ENCODE measurements at regions of chr12 and their contacts with region 1.

Region 1: DNA sequence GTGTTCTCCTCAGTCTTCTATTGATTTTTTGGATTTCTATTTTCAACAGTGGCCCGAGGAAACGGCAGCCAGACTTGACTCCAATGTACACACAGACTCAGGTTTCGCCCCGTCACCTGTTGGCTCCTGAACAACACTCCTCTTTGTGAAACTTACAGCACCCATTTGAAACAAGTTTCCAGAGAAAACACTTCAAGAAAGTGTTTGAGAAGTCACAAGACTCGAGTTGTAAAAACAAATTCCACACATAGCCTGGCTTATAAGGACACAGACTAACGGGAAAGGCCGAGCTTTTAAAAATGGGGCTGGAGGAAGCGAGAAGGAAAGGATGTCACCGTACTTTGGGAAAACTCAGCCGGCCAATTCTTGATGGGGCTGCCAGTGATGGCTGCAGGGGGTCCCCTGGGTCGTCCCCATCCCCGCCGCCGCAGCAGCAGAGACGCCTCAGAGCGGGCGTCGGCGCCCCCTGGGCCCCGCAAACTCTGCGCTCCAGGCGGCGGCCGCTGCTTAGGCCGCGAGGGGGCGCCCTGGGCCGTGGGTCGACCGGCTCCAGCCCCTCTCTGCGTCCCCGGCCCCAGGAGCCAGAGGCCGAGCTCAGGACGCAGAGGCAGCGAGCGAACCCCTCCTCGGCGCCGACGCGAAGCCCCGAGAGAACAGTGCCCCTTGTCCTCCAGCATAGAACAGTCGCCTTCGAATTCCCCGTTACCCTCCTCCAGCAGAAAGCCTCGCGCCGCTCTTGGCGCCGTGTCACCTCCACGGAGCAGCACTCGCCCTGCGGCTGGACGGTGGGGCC is 106.9 kb downstream of the PRICKLE1 start:
- DNase-seq: peak; percentile 89
- ATAC-seq: peak; percentile 71
- H3K4me3 ChIP-seq: peak overlapping the region; percentile 67 to 96 (median 94)
- H3K4me3 Mint-ChIP-seq: peak overlapping the region; percentile 97
- H3K27ac ChIP-seq: peak overlapping the region; percentile 76 to 82
- H3K27ac Mint-ChIP-seq: peak overlapping the region; percentile 94
- H3K4me1 ChIP-seq: peaks cover 49 to 55% of the 10 kb centered on the region in 2 donors
- H3K4me1 Mint-ChIP-seq: peaks cover 60% of the 10 kb centered on the region
- H3K27me3 ChIP-seq: no peaks in the 10 kb centered on the region
- H3K27me3 Mint-ChIP-seq: no peaks in the 10 kb centered on the region
- CTCF ChIP-seq: peak; percentile 90

Region 2: DNA sequence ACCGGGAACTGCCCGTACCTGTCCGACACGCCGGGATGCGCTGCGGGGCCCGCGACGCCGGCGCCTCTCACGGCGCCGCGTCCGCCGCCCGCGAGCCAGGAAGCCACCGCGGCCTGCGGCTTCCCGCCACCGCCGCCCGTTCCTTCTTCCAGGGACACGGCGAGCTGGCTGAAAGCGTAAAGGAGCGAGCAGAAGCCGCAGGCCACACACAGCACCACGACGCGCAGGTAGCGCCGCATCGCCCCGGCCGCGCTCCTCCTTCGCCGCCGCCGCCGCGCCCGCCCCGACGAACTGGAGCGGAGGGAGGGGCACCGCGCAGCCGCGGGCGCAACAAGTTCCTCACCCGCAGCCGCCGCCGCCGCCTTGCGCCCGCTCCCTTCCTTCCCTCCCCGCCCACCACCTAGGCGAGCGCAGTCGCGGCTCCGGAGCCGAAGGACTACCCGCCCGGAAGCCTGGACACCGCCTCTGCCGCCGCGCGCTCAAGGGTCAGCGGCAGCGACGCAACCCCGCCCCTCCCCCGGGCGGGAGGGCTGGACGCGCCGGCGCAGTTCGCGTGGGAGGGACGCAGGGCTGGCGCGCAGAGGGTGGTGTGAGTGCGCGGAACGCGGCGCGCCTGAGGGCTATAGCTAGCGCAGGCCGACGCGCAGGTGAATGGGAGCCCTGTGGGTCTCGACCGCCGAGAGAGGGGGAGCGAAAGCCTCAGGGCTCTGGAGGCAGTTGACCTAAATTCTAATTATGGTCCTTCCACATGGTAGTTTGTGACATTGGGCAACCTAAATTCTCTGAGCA is 338.0 kb before region 1 on chr12 and contains the start of gene GXYLT1:
- CTCF ChIA-PET with region 1: no interaction called
- POLR2A ChIA-PET with region 1: no interaction called
- intact Hi-C with region 1: loop called (anchors 2 kb)
- DNase-seq: peak; percentile 90
- ATAC-seq: peak; percentile 91
- H3K4me3 ChIP-seq: peak within 1 kb of the TSS; percentile 60 to 78 (median 74)
- H3K4me3 Mint-ChIP-seq: peak within 1 kb of the TSS; percentile 94
- H3K27ac ChIP-seq: peak within 1 kb of the TSS in 1 of 2 donors; percentile 68
- H3K27ac Mint-ChIP-seq: peak within 1 kb of the TSS; percentile 88
- H3K4me1 ChIP-seq: peaks cover 21 to 27% of the 10 kb centered on the region in 2 donors
- H3K4me1 Mint-ChIP-seq: peaks cover 40% of the 10 kb centered on the region
- H3K27me3 ChIP-seq: no peaks in the 10 kb centered on the region
- H3K27me3 Mint-ChIP-seq: no peaks in the 10 kb centered on the region
- CTCF ChIP-seq: no peak
- total RNA-seq, gene GXYLT1: 9.4 and 10.4 TPM in 2 replicates

Region 3: DNA sequence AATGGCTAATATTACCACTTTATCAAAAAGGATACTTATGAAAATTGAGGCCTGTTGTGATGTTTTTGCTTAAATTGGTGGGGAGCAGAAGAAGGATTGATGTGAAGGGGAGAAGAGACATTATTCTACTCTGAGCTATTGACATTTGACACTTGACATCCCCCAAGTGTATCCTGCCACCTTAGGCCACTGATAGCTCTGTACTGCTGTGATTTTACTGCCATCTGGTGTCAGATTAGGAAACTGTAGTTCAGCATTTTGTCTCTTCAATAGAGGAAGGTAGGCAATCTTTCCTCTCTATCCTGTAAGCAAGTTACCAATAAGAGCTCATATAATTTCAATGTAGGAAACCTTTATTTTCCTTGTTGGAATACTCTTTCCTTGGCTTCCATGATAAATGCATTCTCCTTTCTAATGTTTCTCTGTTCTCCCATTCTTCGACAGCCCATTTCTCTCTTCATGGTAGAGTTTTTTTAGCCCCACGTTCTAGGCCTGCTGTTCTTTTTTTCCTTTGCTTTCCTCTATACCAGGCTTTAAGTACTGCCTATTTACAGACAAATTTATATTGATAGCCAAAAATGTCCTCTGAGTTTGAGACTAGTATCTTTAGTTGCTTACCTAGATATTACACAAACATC is 110.4 kb before region 1 on chr12:
- CTCF ChIA-PET with region 1: interaction called, 17 read pairs
- POLR2A ChIA-PET with region 1: interaction called, 3 read pairs
- intact Hi-C with region 1: loop called (anchors 5 kb)
- DNase-seq: peak; percentile 76
- ATAC-seq: peak; percentile 92
- H3K4me3 ChIP-seq: no peak overlapping the region
- H3K4me3 Mint-ChIP-seq: no peak overlapping the region
- H3K27ac ChIP-seq: no peak overlapping the region
- H3K27ac Mint-ChIP-seq: no peak overlapping the region
- H3K4me1 ChIP-seq: peaks cover 4 to 5% of the 10 kb centered on the region in 2 donors
- H3K4me1 Mint-ChIP-seq: peaks cover 14% of the 10 kb centered on the region
- H3K27me3 ChIP-seq: no peaks in the 10 kb centered on the region
- H3K27me3 Mint-ChIP-seq: no peaks in the 10 kb centered on the region
- CTCF ChIP-seq: peak; percentile 89

Region 4: GRCh38 chr12:42524716-42525115 is 42.1 kb after region 1 on chr12:
- CTCF ChIA-PET with region 1: no interaction called
- POLR2A ChIA-PET with region 1: interaction called, 12 read pairs
- intact Hi-C with region 1: no loop called
- DNase-seq: no peak
- ATAC-seq: no peak
- H3K4me3 ChIP-seq: no peak overlapping the region
- H3K4me3 Mint-ChIP-seq: no peak overlapping the region
- H3K27ac ChIP-seq: no peak overlapping the region
- H3K27ac Mint-ChIP-seq: no peak overlapping the region
- H3K4me1 ChIP-seq: no peaks in the 10 kb centered on the region
- H3K4me1 Mint-ChIP-seq: no peaks in the 10 kb centered on the region
- H3K27me3 ChIP-seq: no peaks in the 10 kb centered on the region
- H3K27me3 Mint-ChIP-seq: peaks cover 3% of the 10 kb centered on the region
- CTCF ChIP-seq: no peak

Region 5: GRCh38 chr12:42767326-42767954 is 284.8 kb after region 1 on chr12:
- CTCF ChIA-PET with region 1: no interaction called
- POLR2A ChIA-PET with region 1: no interaction called
- intact Hi-C with region 1: no loop called
- DNase-seq: no peak
- ATAC-seq: no peak
- H3K4me3 ChIP-seq: no peak overlapping the region
- H3K4me3 Mint-ChIP-seq: no peak overlapping the region
- H3K27ac ChIP-seq: no peak overlapping the region
- H3K27ac Mint-ChIP-seq: no peak overlapping the region
- H3K4me1 ChIP-seq: no peaks in the 10 kb centered on the region
- H3K4me1 Mint-ChIP-seq: peaks cover 2% of the 10 kb centered on the region
- H3K27me3 ChIP-seq: no peaks in the 10 kb centered on the region
- H3K27me3 Mint-ChIP-seq: peaks cover 3% of the 10 kb centered on the region
- CTCF ChIP-seq: no peak

Region 6: DNA sequence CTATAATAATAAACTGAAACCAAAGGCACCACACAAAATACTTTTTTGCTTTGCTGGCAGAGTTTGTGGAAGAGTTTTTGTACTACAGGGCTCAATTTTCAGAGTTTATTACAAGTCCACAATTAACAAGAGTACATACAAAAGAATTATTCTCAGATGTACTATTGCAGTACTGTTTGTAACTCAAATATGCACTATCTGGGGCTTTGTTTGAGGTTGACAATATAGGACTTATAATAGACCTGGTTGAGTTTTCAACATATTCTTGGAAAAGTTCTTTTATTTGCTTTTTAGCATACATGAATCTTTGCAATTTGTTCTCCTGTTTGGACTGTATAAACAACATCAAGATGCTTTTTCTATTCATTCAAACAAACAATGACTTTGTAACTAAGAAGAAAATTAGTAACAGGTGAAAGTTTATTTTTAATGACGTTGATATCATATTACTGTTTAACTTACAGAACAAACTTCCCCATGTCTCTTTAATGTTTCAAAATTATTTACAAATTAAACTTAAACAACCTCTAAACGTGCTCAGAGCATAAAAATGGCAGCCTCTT is 514.3 kb after region 1 on chr12:
- CTCF ChIA-PET with region 1: no interaction called
- POLR2A ChIA-PET with region 1: no interaction called
- intact Hi-C with region 1: no loop called
- DNase-seq: no peak
- ATAC-seq: no peak
- H3K4me3 ChIP-seq: no peak overlapping the region
- H3K4me3 Mint-ChIP-seq: no peak overlapping the region
- H3K27ac ChIP-seq: no peak overlapping the region
- H3K27ac Mint-ChIP-seq: no peak overlapping the region
- H3K4me1 ChIP-seq: no peaks in the 10 kb centered on the region
- H3K4me1 Mint-ChIP-seq: no peaks in the 10 kb centered on the region
- H3K27me3 ChIP-seq: no peaks in the 10 kb centered on the region
- H3K27me3 Mint-ChIP-seq: peaks cover 3% of the 10 kb centered on the region
- CTCF ChIP-seq: no peak

Region 7: DNA sequence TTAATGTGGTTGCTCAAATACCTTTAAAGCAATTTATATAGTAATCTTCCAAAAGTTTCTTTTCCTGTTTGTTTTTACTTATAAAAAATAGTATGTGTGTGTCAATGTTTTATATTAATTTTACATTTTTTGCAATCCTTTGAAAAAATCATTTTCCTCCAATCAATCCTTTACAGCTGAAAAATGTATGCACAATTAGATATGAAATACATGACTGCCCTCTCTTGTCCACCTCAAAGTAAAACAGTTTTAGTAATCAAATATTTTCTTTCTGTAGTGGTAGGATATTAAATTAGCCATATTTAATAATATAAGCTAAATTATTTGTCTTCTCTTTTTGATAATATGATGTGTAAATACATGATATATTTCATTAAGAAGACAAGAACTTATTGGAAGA is 799.5 kb after region 1 on chr12:
- CTCF ChIA-PET with region 1: interaction called, 12 read pairs
- POLR2A ChIA-PET with region 1: no interaction called
- intact Hi-C with region 1: loop called (anchors 5 kb)
- DNase-seq: no peak
- ATAC-seq: no peak
- H3K4me3 ChIP-seq: no peak overlapping the region
- H3K4me3 Mint-ChIP-seq: no peak overlapping the region
- H3K27ac ChIP-seq: no peak overlapping the region
- H3K27ac Mint-ChIP-seq: no peak overlapping the region
- H3K4me1 ChIP-seq: peaks cover 18 to 21% of the 10 kb centered on the region in 2 donors
- H3K4me1 Mint-ChIP-seq: peaks cover 16% of the 10 kb centered on the region
- H3K27me3 ChIP-seq: no peaks in the 10 kb centered on the region
- H3K27me3 Mint-ChIP-seq: no peaks in the 10 kb centered on the region
- CTCF ChIP-seq: no peak

Region 8: GRCh38 chr12:43882578-43883178 is 1400.0 kb after region 1 on chr12:
- CTCF ChIA-PET with region 1: interaction called, 4 read pairs
- POLR2A ChIA-PET with region 1: no interaction called
- intact Hi-C with region 1: loop called (anchors 10 kb)
- DNase-seq: peak; percentile 60
- ATAC-seq: peak; percentile 61
- H3K4me3 ChIP-seq: no peak overlapping the region
- H3K4me3 Mint-ChIP-seq: no peak overlapping the region
- H3K27ac ChIP-seq: no peak overlapping the region
- H3K27ac Mint-ChIP-seq: no peak overlapping the region
- H3K4me1 ChIP-seq: no peaks in the 10 kb centered on the region
- H3K4me1 Mint-ChIP-seq: no peaks in the 10 kb centered on the region
- H3K27me3 ChIP-seq: no peaks in the 10 kb centered on the region
- H3K27me3 Mint-ChIP-seq: no peaks in the 10 kb centered on the region
- CTCF ChIP-seq: peak; percentile 94